ENCODE measurements at regions of chr2 and their contacts with region 1.

Region 1: GRCh38 chr2:101252408-101253012 is at the start of gene CNOT11:
- DNase-seq: peak; percentile 99
- H3K4me3 ChIP-seq: peak within 1 kb of the TSS; percentile 80 to 95
- H3K27ac ChIP-seq: peak within 1 kb of the TSS; percentile 84 to 90
- H3K4me1 ChIP-seq: peaks cover 0 to 34% (median 27%) of the 10 kb centered on the region in 4 donors
- H3K27me3 ChIP-seq: no peaks in the 10 kb centered on the region
- CTCF ChIP-seq: peak in 1 of 2 experiments; percentile 14

Region 2: GRCh38 chr2:101002562-101003277 is 249.8 kb before region 1 on chr2:
- intact Hi-C with region 1: no loop called
- DNase-seq: no peak
- H3K4me3 ChIP-seq: peak overlapping the region; percentile 80 to 94
- H3K27ac ChIP-seq: peak overlapping the region; percentile 85 to 91
- H3K4me1 ChIP-seq: peaks cover 0 to 21% (median 12%) of the 10 kb centered on the region in 4 donors
- H3K27me3 ChIP-seq: no peaks in the 10 kb centered on the region
- CTCF ChIP-seq: no peak

Region 3: DNA sequence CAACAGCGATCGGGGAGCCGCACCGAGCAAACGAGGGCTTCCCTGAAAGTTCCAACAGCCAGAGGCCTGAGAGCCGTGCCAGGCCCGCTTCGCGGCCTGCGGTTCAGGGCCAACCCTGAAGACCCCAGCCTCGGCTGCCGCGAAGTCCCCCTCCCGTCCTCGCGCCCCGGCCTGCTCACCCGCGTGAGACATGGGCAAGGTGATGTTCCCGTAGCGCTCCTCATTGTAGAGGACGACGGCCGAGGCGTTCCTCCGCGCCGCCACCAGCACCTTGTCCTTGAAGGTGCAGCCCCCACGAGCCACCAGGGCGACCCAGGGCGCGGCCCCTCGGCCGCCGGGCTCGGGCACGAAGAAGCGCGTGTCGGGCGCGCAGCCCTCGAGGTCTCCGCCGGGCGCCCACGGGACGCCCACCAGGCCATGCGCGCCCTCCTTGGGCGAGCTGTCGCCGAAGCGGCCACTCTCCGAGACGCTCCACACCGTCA is 55.5 kb after region 1 on chr2:
- intact Hi-C with region 1: loop called (anchors 2 kb)
- DNase-seq: peak in 1 of 2 donors; percentile 66
- H3K4me3 ChIP-seq: peak overlapping the region; percentile 82 to 85
- H3K27ac ChIP-seq: peak overlapping the region; percentile 88 to 90
- H3K4me1 ChIP-seq: peaks cover 0 to 41% (median 21%) of the 10 kb centered on the region in 4 donors
- H3K27me3 ChIP-seq: no peaks in the 10 kb centered on the region
- CTCF ChIP-seq: no peak

Region 4: DNA sequence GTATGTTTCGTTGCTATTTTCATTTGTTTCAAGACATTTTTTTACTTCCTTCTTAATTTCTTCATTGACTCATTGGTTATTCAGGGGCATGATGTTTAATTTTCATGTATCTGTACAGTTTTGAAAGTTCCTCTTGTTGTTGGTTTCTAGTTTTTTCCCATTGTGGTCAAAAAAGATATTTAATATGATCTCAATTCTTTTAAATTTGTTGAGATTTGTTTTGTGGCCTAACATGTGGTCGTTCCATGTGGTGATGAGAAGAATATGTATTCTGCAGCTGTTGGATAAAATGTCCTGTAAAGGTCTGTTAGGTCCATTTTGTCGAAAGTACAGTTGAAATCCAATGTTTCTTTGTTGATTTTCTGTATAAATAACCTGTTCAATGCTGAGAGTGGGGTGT is 334.7 kb after region 1 on chr2:
- intact Hi-C with region 1: no loop called
- DNase-seq: no peak
- H3K4me3 ChIP-seq: no peak overlapping the region
- H3K27ac ChIP-seq: no peak overlapping the region
- H3K4me1 ChIP-seq: no peaks in the 10 kb centered on the region
- H3K27me3 ChIP-seq: no peaks in the 10 kb centered on the region
- CTCF ChIP-seq: no peak

Measured in tibial artery (tissue), 4 donors.